ENCODE measurements at regions of chr11 and their contacts with region 1.

Region 1: GRCh38 chr11:9757809-9758636 is 94.1 kb downstream of the SWAP70 start:
- DNase-seq: peak; percentile 94

Region 2: GRCh38 chr11:9479899-9480298 is 278.1 kb before region 1 on chr11:
- intact Hi-C with region 1: no loop called
- DNase-seq: no peak

Region 3: GRCh38 chr11:9802291-9802861 is 44.4 kb after region 1 on chr11:
- intact Hi-C with region 1: loop called (anchors 5 kb)
- DNase-seq: no peak

Region 4: GRCh38 chr11:9861860-9862725 is 104.1 kb after region 1 on chr11:
- intact Hi-C with region 1: loop called (anchors 5 kb)
- DNase-seq: no peak

Region 5: GRCh38 chr11:9895006-9895405 is 137.0 kb after region 1 on chr11:
- intact Hi-C with region 1: no loop called
- DNase-seq: no peak

Region 6: DNA sequence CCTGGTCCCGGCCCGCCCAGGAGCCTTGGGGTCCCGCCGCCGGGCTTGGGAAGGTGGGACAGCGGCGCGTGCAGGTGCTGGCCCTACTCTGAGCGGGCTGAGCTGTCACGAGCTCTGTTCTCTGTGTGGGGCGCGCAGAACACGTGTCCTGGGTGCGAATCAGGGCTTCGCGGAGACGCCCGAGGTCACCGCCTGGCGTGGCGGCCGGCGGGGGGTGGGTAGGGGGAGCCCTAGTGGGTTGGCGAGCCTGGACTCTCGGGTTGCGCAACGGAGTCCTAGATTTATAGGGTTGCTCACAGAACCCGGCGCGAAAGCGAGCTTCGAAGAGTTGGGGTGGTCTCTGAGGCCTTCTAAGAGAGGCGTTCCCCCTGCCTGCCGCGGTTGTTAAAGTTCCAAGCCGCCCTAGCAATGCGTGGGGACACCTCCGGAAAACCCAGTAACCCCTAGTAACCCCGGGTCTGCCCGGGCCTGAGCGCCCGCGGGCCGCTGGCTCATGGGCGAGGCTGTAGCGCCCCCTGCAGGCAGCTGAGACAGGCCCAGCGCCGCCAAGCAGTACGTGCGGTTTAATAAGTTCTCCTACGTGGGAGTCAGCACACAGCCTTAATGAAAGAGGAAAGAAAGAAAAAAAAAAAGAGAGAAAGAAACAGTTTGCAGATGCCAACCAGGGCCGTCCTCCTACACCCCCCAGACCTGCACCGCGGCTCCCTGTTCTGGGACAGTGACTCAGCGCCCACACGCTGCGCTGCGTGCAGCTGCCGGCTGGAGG is 549.6 kb after region 1 on chr11:
- intact Hi-C with region 1: loop called (anchors 1 kb)
- DNase-seq: peak; percentile 93

Measured in cardiac septum (tissue), 1 donor.